GM10248 (cell line): ENCODE measurements at regions of chr6 and their contacts with region 1.

Region 1: GRCh38 chr6:11496152-11497060 is 41.1 kb upstream of the TMEM170B start:
- DNase-seq: peak; percentile 72
- CTCF ChIP-seq: peak; percentile 75

Region 2: DNA sequence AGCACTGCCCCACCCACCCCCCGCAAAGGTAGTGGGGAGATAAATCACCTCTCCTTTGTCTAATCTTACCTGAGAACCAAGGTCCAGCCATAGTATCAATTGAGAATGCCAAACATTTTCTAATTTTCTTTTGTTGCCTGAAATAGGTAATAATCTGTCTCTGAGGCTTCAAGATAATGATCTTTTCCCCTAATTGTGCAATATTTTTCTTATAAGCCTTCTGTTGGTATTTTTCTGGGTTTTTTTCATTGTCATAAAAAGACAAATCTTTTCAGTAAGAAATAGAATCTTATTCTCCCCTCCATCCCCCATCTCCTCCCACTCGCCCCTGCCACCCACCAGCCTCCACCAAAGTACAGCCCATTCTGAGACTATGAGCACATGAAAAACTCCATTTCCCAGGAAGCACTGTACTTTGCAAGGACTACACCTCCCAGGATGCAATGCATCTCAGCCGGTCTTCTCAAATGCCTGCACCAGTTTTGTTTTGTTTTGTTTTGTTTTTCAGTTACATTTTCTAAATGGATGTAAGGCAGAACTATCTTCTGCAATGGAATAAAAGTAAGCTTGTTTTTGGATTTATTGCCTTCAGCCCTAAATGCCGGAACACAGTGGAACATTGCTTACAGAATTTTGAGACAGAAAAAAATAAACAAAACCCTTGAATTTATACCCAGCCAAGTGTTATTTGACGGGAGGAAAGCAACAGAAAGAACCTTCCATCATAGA is 1349.5 kb before region 1 on chr6:
- CTCF ChIA-PET with region 1: no interaction called
- POLR2A ChIA-PET with region 1: no interaction called
- DNase-seq: peak; percentile 48
- CTCF ChIP-seq: no peak

Region 3: GRCh38 chr6:11144393-11144851 is 352.0 kb before region 1 on chr6:
- CTCF ChIA-PET with region 1: interaction called, 79 read pairs
- POLR2A ChIA-PET with region 1: no interaction called
- DNase-seq: peak; percentile 83
- CTCF ChIP-seq: peak; percentile 96

Region 4: DNA sequence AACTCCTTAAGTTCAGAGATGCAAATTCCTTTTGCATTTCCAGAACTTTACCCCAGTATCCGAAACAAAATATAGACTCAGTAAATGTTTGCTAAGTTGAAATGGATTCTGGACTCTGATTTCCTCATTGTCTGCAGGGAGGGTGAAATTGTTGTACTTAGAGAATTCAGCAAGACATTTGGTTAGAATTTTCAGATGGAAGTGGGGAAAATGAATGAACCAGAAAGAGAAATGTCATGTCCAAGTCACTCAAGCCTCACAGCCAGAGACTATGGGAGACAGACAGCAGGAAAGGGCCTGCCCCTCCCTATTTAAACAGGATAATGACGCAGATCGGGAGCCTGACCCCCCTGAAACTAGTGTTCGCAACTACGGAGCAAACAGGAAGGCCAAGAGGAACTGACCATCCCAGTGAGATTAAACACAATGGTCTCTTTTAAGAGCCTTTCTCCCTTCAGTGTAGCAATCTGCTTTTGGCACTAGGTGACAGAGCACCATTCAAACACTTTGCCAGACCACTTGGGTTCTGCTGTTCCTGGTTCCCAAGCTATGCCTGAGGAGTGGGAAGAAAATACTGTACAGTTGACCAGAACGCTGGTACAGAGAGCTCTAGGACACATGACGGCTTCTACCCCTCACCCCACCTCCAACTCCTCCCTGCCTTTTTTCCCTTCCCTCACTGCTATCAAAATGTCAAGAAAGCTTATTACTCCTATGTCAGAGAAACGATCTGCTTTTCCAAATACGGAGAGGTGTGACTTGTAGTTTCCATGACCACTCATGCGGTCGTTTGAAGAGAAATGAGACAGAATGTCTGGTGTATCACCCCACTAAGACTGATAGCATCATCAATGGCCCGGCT is 277.6 kb before region 1 on chr6:
- CTCF ChIA-PET with region 1: interaction called, 23 read pairs
- POLR2A ChIA-PET with region 1: no interaction called
- DNase-seq: no peak
- CTCF ChIP-seq: no peak

Region 5: GRCh38 chr6:11324453-11325015 is 171.9 kb before region 1 on chr6:
- CTCF ChIA-PET with region 1: interaction called, 30 read pairs
- POLR2A ChIA-PET with region 1: no interaction called
- DNase-seq: peak; percentile 69
- CTCF ChIP-seq: no peak

Region 6: GRCh38 chr6:11374036-11375010 is 122.1 kb before region 1 on chr6:
- CTCF ChIA-PET with region 1: interaction called, 48 read pairs
- POLR2A ChIA-PET with region 1: no interaction called
- DNase-seq: peak; percentile 63
- CTCF ChIP-seq: no peak

Region 7: GRCh38 chr6:11467364-11467763 is 29.0 kb before region 1 on chr6:
- CTCF ChIA-PET with region 1: interaction called, 10 read pairs
- POLR2A ChIA-PET with region 1: no interaction called
- DNase-seq: peak; percentile 39
- CTCF ChIP-seq: no peak

Region 8: GRCh38 chr6:11575408-11576033 is 79.1 kb after region 1 on chr6:
- CTCF ChIA-PET with region 1: interaction called, 20 read pairs
- POLR2A ChIA-PET with region 1: no interaction called
- DNase-seq: peak; percentile 45
- CTCF ChIP-seq: peak; percentile 94